IMR-90 (cell line): ENCODE measurements at regions of chr12 and their contacts with region 1.

Region 1: DNA sequence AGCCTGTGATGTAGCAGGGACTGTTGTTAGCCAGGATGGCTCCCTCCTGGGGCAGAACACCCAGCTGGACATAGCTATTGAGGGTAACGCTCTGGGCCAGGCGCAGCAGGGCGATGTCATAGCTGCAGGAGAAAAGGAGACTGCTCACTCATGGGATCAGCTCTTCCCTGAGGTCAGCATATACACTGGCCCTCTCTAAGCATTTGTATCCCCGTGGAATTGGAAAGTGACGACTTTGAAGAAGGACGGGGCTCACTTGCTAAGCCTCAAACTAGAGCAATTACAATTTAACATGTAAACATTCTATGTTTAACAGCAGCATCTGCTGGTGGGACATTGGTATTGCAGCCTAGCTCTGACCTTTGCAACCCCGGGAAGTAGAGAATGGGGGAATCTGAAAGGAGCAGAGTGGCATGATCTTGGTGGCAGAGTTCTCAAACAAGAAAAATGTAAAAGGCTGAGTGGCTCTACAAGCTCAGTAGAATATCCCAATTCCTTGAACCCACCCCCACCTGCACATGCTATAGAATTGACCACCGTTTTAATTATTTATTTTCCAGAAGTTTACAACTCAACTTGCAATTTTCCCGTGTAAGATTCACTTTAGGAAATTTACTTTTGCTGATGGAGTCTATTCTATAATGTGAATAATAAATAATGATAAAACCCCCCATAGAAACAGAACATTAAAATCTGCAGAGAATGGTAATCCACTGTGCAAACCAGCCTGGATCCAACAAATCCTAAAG is 5.0 kb downstream of the CELA1 start:
- DNase-seq: peak; percentile 64
- ATAC-seq: peak; percentile 96
- H3K4me3 ChIP-seq: no peak overlapping the region; the same call in 1 of the 2 replicates
- H3K27ac ChIP-seq: no peak overlapping the region
- H3K4me1 ChIP-seq: peaks cover 4% of the 10 kb centered on the region; the same call in 1 of the 2 replicates
- H3K27me3 ChIP-seq: no peaks in the 10 kb centered on the region; the same call in 1 of the 2 replicates
- CTCF ChIP-seq: peak; percentile 93
- POLR2A ChIP-seq: 0 out of 2 replicates have a peak, but pooled peaks have one; percentile 32
- RAD21 ChIP-seq: peak; percentile 91

Region 2: DNA sequence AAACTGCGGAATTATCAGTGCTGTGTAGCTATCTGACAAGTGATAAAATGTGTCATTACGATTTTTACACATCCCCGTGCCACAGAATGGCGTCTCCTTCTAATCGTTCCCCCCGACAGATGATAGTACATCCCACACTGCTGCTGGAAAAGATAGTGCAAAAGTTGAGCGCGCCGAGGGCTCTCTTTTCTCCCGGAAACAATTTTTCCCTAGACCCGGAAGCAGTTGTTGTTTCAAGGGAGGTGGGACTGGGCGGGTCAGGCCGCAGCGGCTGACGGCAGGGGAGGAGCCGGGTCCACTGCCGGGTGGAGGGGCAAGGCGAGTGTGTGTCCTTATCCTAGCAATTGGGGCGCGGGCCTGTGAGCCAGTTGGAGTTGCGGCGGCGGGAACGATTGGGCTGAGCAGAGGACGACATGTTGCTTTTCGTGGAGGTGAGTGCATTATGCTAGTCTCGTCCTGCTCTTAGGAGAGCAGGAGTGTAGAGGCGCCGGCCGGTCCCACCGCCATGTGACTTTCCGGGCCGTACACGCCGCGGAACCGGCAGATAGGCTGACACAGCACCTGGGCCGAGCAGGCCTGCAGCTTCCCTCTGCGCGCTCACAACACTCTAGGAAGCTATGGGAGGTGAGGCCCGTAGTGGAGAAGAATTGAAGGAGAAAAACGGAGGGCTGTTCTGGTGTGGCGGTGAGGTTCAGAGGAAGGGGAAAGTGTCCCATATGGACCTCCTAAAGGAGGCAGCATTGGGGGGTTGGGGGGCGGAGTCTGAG is 940.7 kb before region 1 on chr12 and contains the start of gene LARP4:
- CTCF ChIA-PET with region 1: no interaction called
- POLR2A ChIA-PET with region 1: no interaction called
- dilution Hi-C with region 1: no loop called
- in situ Hi-C with region 1: no loop called
- intact Hi-C with region 1: no loop called
- DNase-seq: peak; percentile 92
- ATAC-seq: peak; percentile 97
- H3K4me3 ChIP-seq: peak within 1 kb of the TSS; percentile 81
- H3K27ac ChIP-seq: peak within 1 kb of the TSS; percentile 89
- H3K4me1 ChIP-seq: peaks cover 3% of the 10 kb centered on the region
- H3K27me3 ChIP-seq: no peaks in the 10 kb centered on the region
- CTCF ChIP-seq: no peak
- POLR2A ChIP-seq: peak; percentile 85
- RAD21 ChIP-seq: no peak
- total RNA-seq, gene LARP4: 41.7 and 42.5 TPM in 2 replicates

Region 3: GRCh38 chr12:51047655-51048540 is 293.5 kb before region 1 on chr12 and contains the start of gene LETMD1:
- CTCF ChIA-PET with region 1: no interaction called
- POLR2A ChIA-PET with region 1: no interaction called
- dilution Hi-C with region 1: no loop called
- in situ Hi-C with region 1: no loop called
- intact Hi-C with region 1: loop called (anchors 2 kb)
- DNase-seq: peak; percentile 99
- ATAC-seq: peak; percentile 99
- H3K4me3 ChIP-seq: peak within 1 kb of the TSS; percentile 67
- H3K27ac ChIP-seq: peak within 1 kb of the TSS; percentile 92
- H3K4me1 ChIP-seq: no peaks in the 10 kb centered on the region; the same call in 1 of the 2 replicates
- H3K27me3 ChIP-seq: no peaks in the 10 kb centered on the region
- CTCF ChIP-seq: peak; percentile 90
- POLR2A ChIP-seq: peak; percentile 44; the same call in 1 of the 2 replicates
- RAD21 ChIP-seq: peak; percentile 80
- total RNA-seq, gene LETMD1: 16.7 and 27.6 TPM in 2 replicates

Region 4: GRCh38 chr12:51108136-51108535 is 233.3 kb before region 1 on chr12:
- CTCF ChIA-PET with region 1: no interaction called
- POLR2A ChIA-PET with region 1: no interaction called
- dilution Hi-C with region 1: no loop called
- in situ Hi-C with region 1: no loop called
- intact Hi-C with region 1: loop called (anchors 5 kb)
- DNase-seq: no peak
- ATAC-seq: no peak
- H3K4me3 ChIP-seq: no peak overlapping the region
- H3K27ac ChIP-seq: no peak overlapping the region
- H3K4me1 ChIP-seq: no peaks in the 10 kb centered on the region
- H3K27me3 ChIP-seq: no peaks in the 10 kb centered on the region
- CTCF ChIP-seq: no peak
- POLR2A ChIP-seq: no peak
- RAD21 ChIP-seq: no peak

Region 5: DNA sequence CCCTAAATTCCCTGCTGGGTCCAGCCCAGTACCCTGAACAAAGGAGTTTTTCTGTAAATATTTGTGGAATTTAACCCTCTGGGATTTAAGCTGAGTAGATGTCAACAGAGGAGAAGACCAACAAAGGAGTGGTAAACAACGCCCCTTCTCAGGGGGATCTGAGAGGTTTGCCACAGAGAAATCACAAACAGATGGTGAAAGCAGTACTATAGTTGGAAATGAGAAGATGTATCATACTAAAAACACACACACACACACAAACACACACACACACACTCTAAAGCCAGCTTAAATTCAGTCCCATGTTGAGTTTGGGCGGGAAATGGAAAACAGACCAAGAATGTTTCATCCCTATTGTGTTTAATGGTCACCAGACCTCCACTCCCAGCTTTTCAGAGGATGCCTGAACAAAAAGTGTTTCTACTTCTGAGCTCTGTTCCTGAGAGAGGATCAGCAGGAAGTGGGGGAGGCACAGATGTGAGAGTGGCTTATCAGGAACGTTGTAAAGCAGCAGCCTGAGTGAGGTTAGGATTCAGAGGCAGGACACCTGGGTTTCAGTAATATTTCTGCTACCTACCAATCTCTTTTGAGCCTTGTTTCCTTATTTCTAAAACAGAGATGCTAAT is 20.6 kb before region 1 on chr12:
- CTCF ChIA-PET with region 1: interaction called, 16 read pairs
- POLR2A ChIA-PET with region 1: no interaction called
- dilution Hi-C with region 1: no loop called
- in situ Hi-C with region 1: no loop called
- intact Hi-C with region 1: no loop called
- DNase-seq: peak; percentile 26
- ATAC-seq: 0 out of 2 replicates have a peak, but pooled peaks have one; percentile 17
- H3K4me3 ChIP-seq: no peak overlapping the region
- H3K27ac ChIP-seq: no peak overlapping the region
- H3K4me1 ChIP-seq: peaks cover 3% of the 10 kb centered on the region
- H3K27me3 ChIP-seq: no peaks in the 10 kb centered on the region
- CTCF ChIP-seq: no peak
- POLR2A ChIP-seq: no peak
- RAD21 ChIP-seq: no peak